ENCODE measurements at regions of chr1 and their contacts with region 1.

Region 1: GRCh38 chr1:239413916-239414315 is 27.5 kb downstream of the CHRM3 start:
- DNase-seq: no peak
- H3K4me3 ChIP-seq: no peak overlapping the region
- H3K4me3 Mint-ChIP-seq: no peak overlapping the region
- H3K27ac ChIP-seq: no peak overlapping the region
- H3K27ac Mint-ChIP-seq: no peak overlapping the region
- H3K4me1 ChIP-seq: no peaks in the 10 kb centered on the region
- H3K4me1 Mint-ChIP-seq: no peaks in the 10 kb centered on the region
- H3K27me3 ChIP-seq: no peaks in the 10 kb centered on the region
- H3K27me3 Mint-ChIP-seq: peaks cover 0 to 1% (median 0%) of the 10 kb centered on the region in 3 donors
- CTCF ChIP-seq: no peak

Region 2: DNA sequence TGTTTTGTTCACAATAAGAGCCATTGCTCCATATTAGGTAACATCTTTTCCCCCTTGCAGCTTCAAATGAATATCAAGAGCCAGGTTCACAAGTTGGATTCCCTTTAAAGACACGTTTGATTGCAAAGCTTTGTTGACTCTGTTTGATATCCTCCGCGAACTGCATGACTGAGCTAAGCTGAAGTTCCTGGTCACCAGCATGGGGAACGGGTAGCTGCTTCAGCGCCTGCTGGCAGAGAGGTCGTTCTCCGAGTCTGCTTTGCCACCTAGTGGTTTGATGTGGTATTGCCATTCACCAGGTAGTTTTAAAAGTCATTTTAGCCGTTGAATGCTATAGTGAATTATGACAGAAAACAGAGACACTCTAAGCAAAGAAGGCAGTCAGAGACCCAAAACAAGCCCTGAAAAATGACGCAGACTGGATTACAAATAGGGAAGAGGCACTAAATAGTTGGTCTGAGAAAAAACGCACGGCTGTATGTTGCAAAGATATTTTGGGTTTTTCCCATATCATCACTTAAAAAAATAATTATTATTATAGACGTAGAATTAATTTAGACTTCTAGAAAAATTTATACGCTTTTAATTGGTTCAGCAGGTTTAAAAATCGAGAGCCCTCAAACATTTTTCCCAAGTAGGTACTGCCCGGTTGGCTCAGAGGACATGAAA is 484.3 kb after region 1 on chr1:
- intact Hi-C with region 1: loop called (anchors 5 to 10 kb)
- DNase-seq: peak; percentile 77 to 85 (median 83)
- H3K4me3 ChIP-seq: peak overlapping the region in 2 of 3 experiments; percentile 20 to 59
- H3K4me3 Mint-ChIP-seq: peak overlapping the region; percentile 25 to 76
- H3K27ac ChIP-seq: no peak overlapping the region
- H3K27ac Mint-ChIP-seq: no peak overlapping the region
- H3K4me1 ChIP-seq: peaks cover 5 to 8% of the 10 kb centered on the region in 2 donors
- H3K4me1 Mint-ChIP-seq: peaks cover 8% of the 10 kb centered on the region
- H3K27me3 ChIP-seq: no peaks in the 10 kb centered on the region
- H3K27me3 Mint-ChIP-seq: peaks cover 1 to 4% (median 1%) of the 10 kb centered on the region in 3 donors
- CTCF ChIP-seq: peak; percentile 82

Region 3: GRCh38 chr1:239909898-239910297 is 496.0 kb after region 1 on chr1:
- intact Hi-C with region 1: loop called in 1 of 2 experiments (anchors 10 kb)
- DNase-seq: peak; percentile 77 to 92 (median 87)
- H3K4me3 ChIP-seq: no peak overlapping the region
- H3K4me3 Mint-ChIP-seq: peak overlapping the region in 1 of 2 donors; percentile 42
- H3K27ac ChIP-seq: peak overlapping the region in 1 of 2 donors; percentile 11
- H3K27ac Mint-ChIP-seq: peak overlapping the region in 1 of 7 donors; percentile 76
- H3K4me1 ChIP-seq: peaks cover 42 to 53% of the 10 kb centered on the region in 2 donors
- H3K4me1 Mint-ChIP-seq: peaks cover 50% of the 10 kb centered on the region
- H3K27me3 ChIP-seq: no peaks in the 10 kb centered on the region
- H3K27me3 Mint-ChIP-seq: peaks cover 0 to 3% (median 0%) of the 10 kb centered on the region in 3 donors
- CTCF ChIP-seq: no peak